Activated CD4-positive, alpha-beta memory T cell treated with anti-CD3 and anti-CD28 coated beads, Interleukin-2, amount 10 ng/mL, durations not matched to agents 7 days and 5 days (primary cell): ENCODE measurements at regions of chr6 and their contacts with region 1.

Region 1: DNA sequence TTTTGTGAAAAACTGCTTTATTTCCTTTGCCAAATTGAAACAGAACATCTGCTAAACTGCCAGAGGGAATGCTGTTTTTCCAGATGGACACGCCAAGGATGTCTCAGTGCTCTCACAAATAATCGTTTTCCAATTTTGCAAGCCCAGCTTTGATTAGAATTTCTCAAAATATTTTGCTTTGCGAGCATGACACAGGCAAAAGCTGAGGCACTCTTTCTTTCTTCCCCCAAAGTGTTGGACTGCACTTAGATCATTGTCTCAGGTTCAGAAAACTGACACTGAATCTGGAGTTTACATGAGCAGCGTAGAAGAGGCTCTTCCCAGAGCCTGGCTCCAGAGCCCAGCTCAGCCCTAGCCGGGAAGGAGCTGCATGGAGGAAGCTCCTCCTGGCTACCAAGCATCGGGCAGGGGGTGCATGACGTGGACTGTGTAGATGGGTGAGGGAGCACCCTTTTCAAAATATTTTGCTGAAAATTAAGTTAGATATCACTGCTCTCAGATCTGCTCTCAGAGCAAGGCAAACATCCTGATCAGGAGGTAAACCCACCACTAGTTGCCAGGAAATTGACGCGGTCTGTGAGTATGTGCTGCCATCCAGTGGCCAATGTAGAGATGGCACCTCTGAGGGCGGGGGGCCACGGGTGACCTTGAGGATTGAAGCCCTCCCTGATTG is 107.5 kb downstream of the SLC22A3 start:
- DNase-seq: peak; percentile 74
- H3K4me3 Mint-ChIP-seq: no peak overlapping the region
- H3K27ac Mint-ChIP-seq: no peak overlapping the region
- H3K4me1 Mint-ChIP-seq: peaks cover 26% of the 10 kb centered on the region
- H3K27me3 Mint-ChIP-seq: peaks cover 6% of the 10 kb centered on the region

Region 2: GRCh38 chr6:160137989-160138835 is 317.5 kb before region 1 on chr6:
- CTCF ChIA-PET with region 1: interaction called, 22 read pairs
- POLR2A ChIA-PET with region 1: interaction called, 4 read pairs
- DNase-seq: peak; percentile 76
- H3K4me3 Mint-ChIP-seq: no peak overlapping the region
- H3K27ac Mint-ChIP-seq: no peak overlapping the region
- H3K4me1 Mint-ChIP-seq: peaks cover 9% of the 10 kb centered on the region
- H3K27me3 Mint-ChIP-seq: no peaks in the 10 kb centered on the region

Region 3: DNA sequence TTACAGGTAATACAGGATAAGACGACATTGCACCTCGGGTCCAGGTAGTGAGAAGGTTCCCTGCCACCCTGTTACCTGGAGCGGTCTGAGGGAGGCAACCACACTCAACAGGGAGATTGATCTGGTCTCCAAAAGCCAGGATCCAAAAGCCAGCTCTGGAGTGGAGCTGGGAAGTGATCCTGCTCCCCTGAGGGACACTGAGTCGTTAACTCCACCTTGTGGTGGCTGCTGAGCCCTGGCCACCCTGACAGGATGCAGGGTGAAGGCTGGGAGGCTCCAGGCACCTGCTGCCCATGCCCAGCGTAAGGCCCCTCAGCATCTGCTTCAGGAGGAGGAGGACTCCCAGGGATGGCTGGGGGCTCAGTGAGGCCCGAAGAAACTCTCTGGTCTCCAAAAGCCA is 158.4 kb before region 1 on chr6:
- CTCF ChIA-PET with region 1: no interaction called
- POLR2A ChIA-PET with region 1: no interaction called
- DNase-seq: no peak
- H3K4me3 Mint-ChIP-seq: no peak overlapping the region
- H3K27ac Mint-ChIP-seq: no peak overlapping the region
- H3K4me1 Mint-ChIP-seq: no peaks in the 10 kb centered on the region
- H3K27me3 Mint-ChIP-seq: no peaks in the 10 kb centered on the region

Region 4: GRCh38 chr6:160534050-160534696 is 78.5 kb after region 1 on chr6:
- CTCF ChIA-PET with region 1: interaction called, 10 read pairs
- POLR2A ChIA-PET with region 1: no interaction called
- DNase-seq: peak; percentile 57
- H3K4me3 Mint-ChIP-seq: no peak overlapping the region
- H3K27ac Mint-ChIP-seq: no peak overlapping the region
- H3K4me1 Mint-ChIP-seq: no peaks in the 10 kb centered on the region
- H3K27me3 Mint-ChIP-seq: peaks cover 13% of the 10 kb centered on the region